ENCODE measurements at regions of chr3 and their contacts with region 1.

Region 1: DNA sequence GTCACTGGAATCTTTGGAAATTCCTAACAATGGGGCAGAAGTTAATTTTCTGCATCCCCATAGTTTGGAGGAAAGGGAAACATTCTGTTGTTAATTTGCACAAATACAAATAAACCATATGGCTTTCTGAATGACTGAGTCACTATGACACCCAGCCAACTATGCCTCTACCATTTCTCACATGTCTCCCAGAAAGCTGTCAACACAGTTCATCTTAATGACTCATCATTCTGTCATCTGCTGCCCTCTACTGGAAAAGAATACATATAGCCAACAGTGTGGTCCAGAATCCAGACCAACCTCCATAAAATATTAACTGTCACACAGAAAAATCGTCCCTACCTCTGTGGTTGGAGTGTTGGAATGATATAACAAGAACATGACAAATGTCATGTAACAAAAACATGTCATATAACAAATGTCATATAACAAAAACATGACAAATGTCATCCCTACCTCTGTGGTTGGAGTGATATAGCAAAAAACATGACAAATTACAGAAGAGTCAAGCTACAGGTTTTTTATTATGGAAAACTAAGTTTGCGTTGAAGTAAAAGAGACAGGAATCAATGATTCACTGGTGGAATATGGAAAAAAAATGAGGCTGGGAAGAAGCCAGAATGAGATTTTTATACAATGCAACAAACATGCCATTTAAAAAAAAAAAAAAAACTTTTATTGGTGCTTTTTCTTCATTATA is 47.7 kb upstream of the GYG1 start:
- DNase-seq: no peak

Region 2: GRCh38 chr3:148379763-148380382 is 563.8 kb before region 1 on chr3:
- intact Hi-C with region 1: loop called in 1 of 2 experiments (anchors 10 kb)
- DNase-seq: no peak

Region 3: DNA sequence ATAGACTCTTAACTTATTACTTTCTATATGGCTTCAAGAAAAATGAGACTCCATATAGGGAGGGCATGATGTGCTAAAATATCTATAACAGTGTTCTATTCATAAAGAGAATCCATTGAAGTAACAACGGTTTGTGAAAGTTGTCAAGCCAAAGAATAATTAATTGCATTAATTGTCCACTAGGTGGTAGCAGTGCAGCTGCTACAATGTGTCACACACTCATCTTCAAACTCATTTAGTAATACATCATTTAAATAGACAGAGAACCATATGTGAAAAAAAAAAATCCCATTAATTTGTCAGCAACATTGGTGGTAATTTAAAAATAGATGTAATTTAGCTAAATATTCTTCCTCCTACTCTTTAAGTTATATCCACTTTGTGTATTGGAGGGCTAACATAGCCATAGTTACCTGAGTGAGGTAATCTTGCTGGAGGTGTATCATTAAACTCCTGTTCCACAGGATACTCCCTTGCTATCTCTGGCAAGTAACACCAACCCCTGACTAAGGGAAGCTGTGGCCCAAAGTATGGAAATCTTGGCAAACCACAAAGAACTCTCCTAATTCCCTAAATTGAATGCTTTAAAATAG is 82.3 kb before region 1 on chr3:
- intact Hi-C with region 1: loop called (anchors 5 to 10 kb)
- DNase-seq: no peak

Measured in posterior vena cava (tissue), 2 donors.